T-cell (primary cell): ENCODE measurements at regions of chr5 and their contacts with region 1.

Region 1: GRCh38 chr5:14644623-14645237 is 19.8 kb upstream of the OTULIN start:
- DNase-seq: no peak
- ATAC-seq: no peak
- H3K4me3 ChIP-seq: no peak overlapping the region
- H3K4me3 Mint-ChIP-seq: no peak overlapping the region
- H3K27ac ChIP-seq: no peak overlapping the region
- H3K27ac Mint-ChIP-seq: no peak overlapping the region
- H3K4me1 ChIP-seq: peaks cover 0 to 4% of the 10 kb centered on the region in 2 experiments
- H3K4me1 Mint-ChIP-seq: peaks cover 0 to 6% (median 0%) of the 10 kb centered on the region in 3 donors
- H3K27me3 ChIP-seq: peaks cover 0 to 6% of the 10 kb centered on the region in 2 experiments
- H3K27me3 Mint-ChIP-seq: peaks cover 8 to 11% of the 10 kb centered on the region in 2 donors

Region 2: DNA sequence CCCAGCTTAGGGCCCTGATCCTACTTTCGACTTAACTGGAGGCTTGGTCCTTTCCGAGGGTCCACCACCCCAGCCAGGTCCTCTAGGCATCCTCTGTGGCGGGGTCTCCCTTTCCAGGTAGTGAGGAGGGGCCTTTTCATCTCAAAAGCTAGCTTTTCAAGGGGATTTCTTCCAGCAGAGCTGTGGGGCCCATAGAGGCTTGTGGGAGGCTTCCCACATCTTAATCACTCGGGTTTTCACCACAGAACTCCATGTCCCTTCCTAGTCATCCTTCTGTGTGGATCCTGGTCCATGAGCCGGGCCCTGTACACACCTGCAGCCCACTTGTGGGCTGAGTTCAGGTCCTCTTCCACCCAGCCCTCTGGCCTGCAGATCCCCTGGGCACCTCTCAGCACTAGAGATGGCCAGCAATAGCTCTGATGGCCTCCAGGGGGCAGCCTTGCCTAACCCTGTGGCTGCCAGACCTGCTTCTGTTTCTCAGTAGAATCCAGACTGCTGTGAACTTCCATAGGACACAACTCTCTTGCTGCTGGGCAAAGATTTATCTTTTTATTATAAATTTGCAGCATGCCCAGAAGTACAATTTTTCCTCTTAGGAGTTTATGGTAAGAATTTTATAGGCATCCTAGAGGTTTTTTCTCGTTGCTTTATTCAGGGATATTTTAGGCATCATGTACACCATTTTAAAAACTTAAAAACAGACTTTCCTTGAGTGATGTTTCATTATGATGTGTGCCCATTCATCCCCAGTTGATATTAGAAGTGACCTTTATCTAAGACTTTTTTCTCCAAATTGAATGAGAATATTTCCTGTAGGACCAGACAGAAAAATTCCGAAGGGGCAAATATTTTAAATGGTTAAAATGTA is 292.7 kb before region 1 on chr5:
- CTCF ChIA-PET with region 1: interaction called, 17 to 39 read pairs
- POLR2A ChIA-PET with region 1: no interaction called
- DNase-seq: peak; percentile 6 to 79 (median 46)
- ATAC-seq: peak; percentile 82 to 87 (median 84)
- H3K4me3 ChIP-seq: no peak overlapping the region
- H3K4me3 Mint-ChIP-seq: no peak overlapping the region
- H3K27ac ChIP-seq: no peak overlapping the region
- H3K27ac Mint-ChIP-seq: no peak overlapping the region
- H3K4me1 ChIP-seq: no peaks in the 10 kb centered on the region
- H3K4me1 Mint-ChIP-seq: no peaks in the 10 kb centered on the region
- H3K27me3 ChIP-seq: peaks cover 0 to 10% of the 10 kb centered on the region in 2 experiments
- H3K27me3 Mint-ChIP-seq: peaks cover 7 to 8% of the 10 kb centered on the region in 2 donors

Region 3: DNA sequence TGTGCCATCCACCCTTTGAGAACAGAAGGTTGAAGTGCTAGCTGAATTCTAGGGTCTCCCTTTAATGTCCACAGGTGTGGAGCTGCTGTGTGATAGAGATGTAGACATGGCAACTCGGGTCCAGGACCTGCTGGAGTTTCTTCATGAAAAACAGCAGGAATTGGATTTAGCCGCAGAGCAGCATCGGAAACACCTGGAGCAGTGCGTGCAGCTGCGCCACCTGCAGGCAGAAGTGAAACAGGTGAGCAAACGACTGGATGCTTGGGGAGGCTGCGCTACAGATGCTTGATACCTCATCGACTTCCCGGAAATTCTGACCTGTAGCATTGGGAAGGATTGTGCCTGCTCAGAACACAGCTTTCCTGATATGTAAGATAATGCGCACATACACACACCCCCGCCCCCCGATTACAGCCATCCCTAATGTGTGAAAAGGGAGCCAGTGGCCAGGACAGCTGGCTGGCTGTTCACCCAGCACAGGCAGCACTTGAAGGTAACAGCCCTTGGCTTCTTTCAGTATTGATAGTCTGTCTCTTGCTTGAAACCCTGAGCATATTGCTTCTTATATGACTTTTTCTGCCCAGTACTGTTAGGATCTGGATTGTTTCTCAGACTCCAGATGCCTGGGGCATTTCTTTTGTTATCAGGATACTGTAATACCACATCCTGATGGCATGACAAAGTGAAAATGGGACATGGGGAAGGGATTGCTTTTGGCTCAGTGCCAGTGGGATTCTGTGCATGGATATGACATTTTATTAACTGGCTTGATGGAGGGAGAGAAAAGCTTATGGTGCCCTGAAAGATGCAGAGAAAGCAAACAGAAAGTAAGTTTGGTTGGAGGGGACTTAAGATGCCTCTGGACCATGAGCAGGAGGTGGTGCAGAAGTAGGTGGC is 279.9 kb before region 1 on chr5:
- CTCF ChIA-PET with region 1: interaction called, 38 to 75 read pairs
- POLR2A ChIA-PET with region 1: no interaction called
- DNase-seq: peak in 3 of 35 experiments; percentile 5 to 22 (median 5)
- ATAC-seq: no peak
- H3K4me3 ChIP-seq: no peak overlapping the region
- H3K4me3 Mint-ChIP-seq: no peak overlapping the region
- H3K27ac ChIP-seq: no peak overlapping the region
- H3K27ac Mint-ChIP-seq: peak overlapping the region in 1 of 2 donors; percentile 37
- H3K4me1 ChIP-seq: peaks cover 25 to 27% of the 10 kb centered on the region in 2 experiments
- H3K4me1 Mint-ChIP-seq: peaks cover 30 to 39% (median 30%) of the 10 kb centered on the region in 3 donors
- H3K27me3 ChIP-seq: no peaks in the 10 kb centered on the region
- H3K27me3 Mint-ChIP-seq: peaks cover 0 to 3% of the 10 kb centered on the region in 2 donors

Region 4: GRCh38 chr5:14399054-14399692 is 245.6 kb before region 1 on chr5:
- CTCF ChIA-PET with region 1: interaction called, 27 to 76 read pairs
- POLR2A ChIA-PET with region 1: interaction called in 1 of 2 experiments, 5 read pairs
- DNase-seq: peak in 8 of 35 experiments; percentile 7 to 73 (median 26)
- ATAC-seq: peak in 3 of 4 experiments; percentile 35 to 61 (median 47)
- H3K4me3 ChIP-seq: no peak overlapping the region
- H3K4me3 Mint-ChIP-seq: no peak overlapping the region
- H3K27ac ChIP-seq: no peak overlapping the region
- H3K27ac Mint-ChIP-seq: no peak overlapping the region
- H3K4me1 ChIP-seq: no peaks in the 10 kb centered on the region
- H3K4me1 Mint-ChIP-seq: peaks cover 15 to 18% (median 15%) of the 10 kb centered on the region in 3 donors
- H3K27me3 ChIP-seq: peaks cover 0 to 4% of the 10 kb centered on the region in 2 experiments
- H3K27me3 Mint-ChIP-seq: no peaks in the 10 kb centered on the region

Region 5: GRCh38 chr5:14581333-14581890 is 63.3 kb before region 1 on chr5 and contains the start of gene OTULINL:
- CTCF ChIA-PET with region 1: interaction called, 4 to 16 read pairs
- POLR2A ChIA-PET with region 1: interaction called in 1 of 2 experiments, 4 read pairs
- DNase-seq: peak; percentile 67 to 90 (median 84)
- ATAC-seq: peak; percentile 87 to 91 (median 89)
- H3K4me3 ChIP-seq: peak within 1 kb of the TSS; percentile 77 to 83
- H3K4me3 Mint-ChIP-seq: peak within 1 kb of the TSS; percentile 77 to 85 (median 85)
- H3K27ac ChIP-seq: peak within 1 kb of the TSS; percentile 68
- H3K27ac Mint-ChIP-seq: peak within 1 kb of the TSS; percentile 89 to 90
- H3K4me1 ChIP-seq: peaks cover 14 to 31% of the 10 kb centered on the region in 2 experiments
- H3K4me1 Mint-ChIP-seq: peaks cover 42 to 46% (median 45%) of the 10 kb centered on the region in 3 donors
- H3K27me3 ChIP-seq: peaks cover 0 to 7% of the 10 kb centered on the region in 2 experiments
- H3K27me3 Mint-ChIP-seq: no peaks in the 10 kb centered on the region
- total RNA-seq, gene OTULINL: 30.0 to 50.1 (median 32.6) TPM